A673 (cell line): ENCODE measurements at regions of chr4 and their contacts with region 1.

Region 1: DNA sequence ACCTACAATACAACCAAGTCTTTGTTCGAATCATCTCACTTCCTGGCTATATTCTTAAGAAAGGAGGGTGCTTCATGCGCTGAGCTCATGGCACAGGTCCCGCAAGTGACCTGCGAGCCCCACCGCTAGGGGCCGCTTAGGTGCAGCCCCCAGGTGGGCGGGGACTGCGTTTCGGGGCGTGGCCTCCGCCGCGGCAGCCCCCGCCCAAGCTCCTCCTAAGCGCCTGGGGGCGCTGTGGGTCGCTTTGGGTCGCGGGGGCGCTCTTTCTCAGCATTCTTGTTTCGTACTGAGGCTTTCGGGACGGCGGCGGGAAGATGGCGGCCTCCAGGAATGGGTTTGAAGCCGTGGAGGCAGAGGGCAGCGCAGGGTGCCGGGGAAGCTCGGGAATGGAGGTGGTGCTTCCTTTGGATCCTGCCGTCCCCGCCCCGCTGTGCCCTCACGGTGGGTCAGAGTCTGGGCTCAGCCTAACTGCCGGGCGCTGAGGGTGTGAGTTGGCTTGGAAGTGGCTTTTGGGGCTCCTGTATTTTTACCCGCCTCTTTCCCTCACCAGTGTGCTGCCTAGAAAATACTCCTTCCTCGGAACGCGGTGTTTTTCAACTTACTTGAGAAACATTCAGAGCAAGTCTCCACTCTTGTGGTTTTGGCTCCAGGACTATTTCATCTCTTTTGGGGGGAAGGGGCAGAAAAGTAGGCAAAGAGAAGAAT is at the start of gene ZCCHC4:
- DNase-seq: peak; percentile 91
- H3K4me3 ChIP-seq: peak within 1 kb of the TSS; percentile 82
- H3K27ac ChIP-seq: peak within 1 kb of the TSS; percentile 85
- H3K4me1 ChIP-seq: peaks cover 6% of the 10 kb centered on the region
- H3K27me3 ChIP-seq: no peaks in the 10 kb centered on the region
- CTCF ChIP-seq: peak; percentile 100
- total RNA-seq, gene ZCCHC4: 17.7 and 18.0 TPM in 2 replicates

Region 2: GRCh38 chr4:24675721-24676389 is 636.8 kb before region 1 on chr4:
- CTCF ChIA-PET with region 1: no interaction called
- POLR2A ChIA-PET with region 1: no interaction called
- intact Hi-C with region 1: no loop called
- DNase-seq: no peak
- H3K4me3 ChIP-seq: no peak overlapping the region
- H3K27ac ChIP-seq: no peak overlapping the region
- H3K4me1 ChIP-seq: no peaks in the 10 kb centered on the region
- H3K27me3 ChIP-seq: peaks cover 11% of the 10 kb centered on the region
- CTCF ChIP-seq: no peak

Region 3: GRCh38 chr4:25234390-25235370 is 78.0 kb before region 1 on chr4:
- CTCF ChIA-PET with region 1: interaction called, 6 read pairs
- POLR2A ChIA-PET with region 1: no interaction called
- intact Hi-C with region 1: loop called (anchors 5 kb)
- DNase-seq: peak; percentile 77
- H3K4me3 ChIP-seq: peak overlapping the region; percentile 60
- H3K27ac ChIP-seq: peak overlapping the region; percentile 74
- H3K4me1 ChIP-seq: peaks cover 11% of the 10 kb centered on the region
- H3K27me3 ChIP-seq: no peaks in the 10 kb centered on the region
- CTCF ChIP-seq: peak; percentile 36; the same call in 1 of the 2 replicates

Region 4: GRCh38 chr4:25351777-25352416 is 39.2 kb after region 1 on chr4:
- CTCF ChIA-PET with region 1: no interaction called
- POLR2A ChIA-PET with region 1: no interaction called
- intact Hi-C with region 1: no loop called
- DNase-seq: no peak
- H3K4me3 ChIP-seq: no peak overlapping the region
- H3K27ac ChIP-seq: no peak overlapping the region
- H3K4me1 ChIP-seq: no peaks in the 10 kb centered on the region
- H3K27me3 ChIP-seq: no peaks in the 10 kb centered on the region
- CTCF ChIP-seq: no peak

Region 5: DNA sequence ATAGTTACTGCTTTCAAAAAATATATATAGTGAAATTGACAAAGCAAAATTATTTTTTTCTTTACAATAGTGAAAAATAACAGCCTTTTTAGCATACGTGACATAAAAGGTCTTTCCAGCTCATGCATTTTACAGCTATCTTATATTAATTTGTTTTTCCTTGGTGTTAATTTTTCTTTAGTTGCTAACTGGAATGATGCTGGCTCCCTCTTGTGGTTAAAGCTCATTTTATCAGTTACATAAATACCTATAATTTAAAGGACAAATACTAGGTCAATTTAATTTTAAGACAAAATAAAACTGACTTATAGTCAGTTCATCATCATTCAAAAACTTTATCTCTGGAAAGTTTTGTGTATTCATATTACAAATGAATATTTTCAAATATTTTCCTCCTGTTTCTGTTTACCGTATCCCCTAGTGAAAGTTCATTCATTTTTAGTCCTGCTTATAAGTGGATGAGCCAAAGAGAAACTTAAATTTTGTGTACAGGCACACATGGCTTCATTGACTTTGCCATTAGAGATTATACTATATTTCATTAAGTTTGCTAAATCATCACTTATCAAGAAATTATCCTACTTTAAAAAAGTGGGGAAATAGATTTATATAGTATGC is 54.5 kb after region 1 on chr4:
- CTCF ChIA-PET with region 1: interaction called, 13 read pairs
- POLR2A ChIA-PET with region 1: no interaction called
- intact Hi-C with region 1: no loop called
- DNase-seq: peak; percentile 57
- H3K4me3 ChIP-seq: no peak overlapping the region
- H3K27ac ChIP-seq: no peak overlapping the region
- H3K4me1 ChIP-seq: no peaks in the 10 kb centered on the region
- H3K27me3 ChIP-seq: no peaks in the 10 kb centered on the region
- CTCF ChIP-seq: peak; percentile 75